HepG2 (cell line): ENCODE measurements at regions of chr3 and their contacts with region 1.

Region 1: DNA sequence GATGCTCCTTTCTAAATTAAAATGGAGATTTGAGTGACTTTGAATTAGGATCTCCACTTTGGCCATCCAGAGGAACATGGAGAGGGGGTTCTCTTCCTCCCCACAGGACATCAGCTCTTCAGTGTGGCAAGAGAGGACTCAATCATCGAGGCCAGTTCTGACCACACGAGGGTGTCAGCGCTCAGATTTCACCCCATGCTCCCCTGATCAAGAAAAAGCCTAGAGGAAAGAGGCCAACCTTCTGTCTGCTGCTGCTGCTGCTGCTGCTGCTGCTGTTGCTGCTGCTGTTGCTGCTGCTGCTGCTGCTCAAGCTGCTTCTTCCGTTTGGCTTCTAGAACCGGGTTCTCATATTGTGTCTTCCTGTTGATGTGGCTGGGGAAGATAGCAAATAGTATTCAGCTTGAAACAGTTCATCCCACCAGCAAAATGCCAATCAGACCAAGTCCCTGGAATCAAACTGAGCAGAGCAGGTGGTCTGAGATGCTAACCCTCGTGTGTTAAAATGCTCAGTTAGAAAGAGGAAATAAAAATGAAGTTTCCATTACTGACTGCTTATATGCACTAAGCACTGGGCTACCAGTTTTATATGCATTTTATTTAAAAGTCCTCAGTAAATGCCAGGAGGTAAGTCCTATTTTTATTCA is 599.0 kb downstream of the MAGI1 start:
- DNase-seq: peak; percentile 32
- ATAC-seq: peak; percentile 96
- H3K4me3 ChIP-seq: no peak overlapping the region
- H3K27ac ChIP-seq: no peak overlapping the region
- H3K4me1 ChIP-seq: no peaks in the 10 kb centered on the region
- H3K27me3 ChIP-seq: no peaks in the 10 kb centered on the region
- CTCF ChIP-seq: peak; percentile 73
- EP300 ChIP-seq: no peak
- POLR2A ChIP-seq: no peak
- RAD21 ChIP-seq: peak; percentile 35; the same call in 1 of the 2 replicates

Region 2: DNA sequence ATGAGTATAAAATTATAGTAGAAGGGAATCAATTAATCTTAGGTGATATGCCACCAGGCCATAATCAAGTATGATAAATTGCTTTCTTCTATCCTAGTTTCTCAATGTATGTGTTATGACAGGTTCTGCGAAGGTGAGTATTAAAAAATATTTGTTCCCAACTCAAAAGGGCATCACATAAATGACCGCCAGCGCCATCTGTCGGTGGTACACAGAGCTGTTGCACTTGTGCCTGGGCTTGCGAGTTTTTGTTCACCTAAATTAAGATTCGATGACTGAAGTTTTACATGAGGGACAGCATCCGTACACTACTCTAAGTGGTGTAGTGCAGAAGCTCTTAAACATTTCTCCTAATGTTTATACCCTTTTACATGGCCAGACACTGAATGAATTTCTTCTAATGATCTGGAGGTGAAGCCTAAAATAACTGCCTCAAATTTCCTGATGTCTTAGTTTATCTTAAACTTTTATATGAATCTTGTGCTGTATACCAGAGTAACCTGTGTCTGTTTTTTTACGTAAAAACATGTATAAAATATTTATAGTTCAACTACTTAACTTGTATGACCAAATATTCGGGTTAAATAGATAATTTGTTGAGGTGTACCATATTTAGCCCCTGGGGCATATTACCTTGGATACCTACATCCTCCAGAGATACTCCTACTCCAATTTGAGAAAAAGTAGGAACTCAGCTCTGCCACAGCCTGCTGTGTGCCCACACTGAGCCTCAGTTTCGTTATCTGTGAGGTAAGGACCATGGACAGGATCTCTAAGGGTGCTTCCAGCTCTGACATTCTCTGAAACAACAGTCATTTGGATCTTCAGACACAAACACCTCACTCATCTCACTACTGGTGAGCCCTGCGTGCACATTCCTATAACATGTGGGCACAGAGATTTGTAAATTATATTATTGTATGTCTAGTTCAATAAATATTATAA is 233.4 kb after region 1 on chr3:
- CTCF ChIA-PET with region 1: no interaction called
- POLR2A ChIA-PET with region 1: no interaction called
- in situ Hi-C with region 1: no loop called
- intact Hi-C with region 1: loop called (anchors 2 kb)
- DNase-seq: peak; percentile 25
- ATAC-seq: peak; percentile 44; the same call in 1 of the 3 replicates
- H3K4me3 ChIP-seq: no peak overlapping the region
- H3K27ac ChIP-seq: no peak overlapping the region
- H3K4me1 ChIP-seq: peaks cover 41% of the 10 kb centered on the region
- H3K27me3 ChIP-seq: no peaks in the 10 kb centered on the region
- CTCF ChIP-seq: peak; percentile 66
- EP300 ChIP-seq: no peak
- POLR2A ChIP-seq: no peak
- RAD21 ChIP-seq: 0 out of 2 replicates have a peak, but pooled peaks have one; percentile 17

Region 3: DNA sequence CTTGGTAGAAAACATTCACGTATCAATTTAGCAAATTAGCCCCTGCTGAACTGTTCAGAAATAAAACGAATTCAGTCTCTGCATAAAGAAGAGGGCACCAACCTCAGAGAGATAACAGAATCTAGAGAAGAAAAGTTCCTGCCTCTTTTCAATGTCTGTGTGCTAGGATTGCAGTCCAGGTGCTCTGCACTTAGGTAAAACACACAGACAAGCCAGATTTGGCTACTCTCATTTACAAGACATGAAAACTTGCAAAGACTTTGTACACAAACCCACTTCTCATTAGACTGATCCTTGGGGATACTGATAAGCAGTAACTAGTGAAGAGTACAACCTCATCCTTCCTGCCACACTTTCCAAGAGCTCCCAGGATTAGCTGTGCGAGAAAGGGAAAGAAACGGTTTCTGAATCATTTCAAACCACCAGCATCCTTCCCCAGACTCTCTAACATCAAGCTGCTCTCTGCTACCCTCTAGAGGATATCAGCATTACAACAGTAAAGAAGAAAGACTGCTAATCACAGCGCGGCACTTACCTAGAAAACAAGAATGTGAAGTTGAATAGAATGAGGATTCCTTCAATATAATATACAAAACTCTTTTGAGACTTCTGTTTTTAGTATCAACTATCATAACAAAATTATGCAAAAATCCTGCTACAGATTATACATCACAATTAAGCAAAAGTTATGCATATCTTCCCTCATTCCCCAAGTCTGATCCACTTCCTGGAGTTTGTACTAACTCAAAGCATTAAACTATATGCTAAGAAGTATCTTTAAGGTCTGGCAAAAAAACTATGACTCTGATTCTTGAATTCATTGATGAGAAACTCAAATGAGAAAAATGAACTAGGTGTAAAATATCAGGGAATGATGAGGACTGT is 292.5 kb after region 1 on chr3:
- CTCF ChIA-PET with region 1: interaction called, 4 read pairs
- POLR2A ChIA-PET with region 1: no interaction called
- in situ Hi-C with region 1: loop called (anchors 10 kb)
- intact Hi-C with region 1: loop called (anchors 1 kb)
- DNase-seq: peak; percentile 54
- ATAC-seq: peak; percentile 65
- H3K4me3 ChIP-seq: no peak overlapping the region
- H3K27ac ChIP-seq: no peak overlapping the region
- H3K4me1 ChIP-seq: peaks cover 38% of the 10 kb centered on the region
- H3K27me3 ChIP-seq: no peaks in the 10 kb centered on the region
- CTCF ChIP-seq: peak; percentile 79
- EP300 ChIP-seq: no peak
- POLR2A ChIP-seq: no peak
- RAD21 ChIP-seq: 0 out of 2 replicates have a peak, but pooled peaks have one; percentile 31

Region 4: DNA sequence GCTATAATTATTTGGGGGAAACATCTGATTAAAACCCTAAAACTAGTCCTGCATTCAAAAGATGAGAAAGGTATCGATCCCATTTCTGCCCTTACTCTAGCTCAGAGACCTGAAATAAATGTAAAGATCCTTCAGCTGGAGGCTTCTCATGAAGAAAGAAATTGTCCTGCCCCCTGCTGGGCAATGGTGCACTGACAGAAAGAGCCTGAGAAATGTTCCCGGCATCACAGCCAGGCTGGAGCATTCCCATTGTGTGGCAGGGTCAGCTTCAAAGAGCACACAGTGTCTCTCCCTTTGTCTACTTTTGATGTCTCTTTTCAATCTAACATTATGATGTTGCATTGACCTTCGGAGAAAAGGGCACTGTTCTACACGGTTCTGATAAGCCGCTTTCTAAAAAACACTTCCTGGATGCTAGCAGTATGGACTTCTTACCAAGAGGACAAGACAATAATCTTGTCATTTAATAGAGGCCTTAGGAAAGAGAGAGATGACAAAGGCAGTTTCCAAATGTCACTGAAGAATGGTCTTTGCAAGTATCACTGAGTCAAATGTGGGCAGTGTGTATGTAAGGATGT is 311.4 kb after region 1 on chr3:
- CTCF ChIA-PET with region 1: interaction called, 3 read pairs
- POLR2A ChIA-PET with region 1: no interaction called
- in situ Hi-C with region 1: no loop called
- intact Hi-C with region 1: loop called (anchors 1 kb)
- DNase-seq: peak; percentile 47
- ATAC-seq: peak; percentile 94
- H3K4me3 ChIP-seq: no peak overlapping the region
- H3K27ac ChIP-seq: no peak overlapping the region
- H3K4me1 ChIP-seq: no peaks in the 10 kb centered on the region
- H3K27me3 ChIP-seq: no peaks in the 10 kb centered on the region
- CTCF ChIP-seq: peak; percentile 77
- EP300 ChIP-seq: no peak
- POLR2A ChIP-seq: no peak
- RAD21 ChIP-seq: 0 out of 2 replicates have a peak, but pooled peaks have one; percentile 10